Activated B cell treated with CpG ODN at 0.5 μM for 24 hours (primary cell): ENCODE measurements at regions of chr5 and their contacts with region 1.

Region 1: GRCh38 chr5:124935065-124935464 is 188.6 kb upstream of the ZNF608 start:
- DNase-seq: no peak
- ATAC-seq: peak; percentile 63
- H3K4me3 Mint-ChIP-seq: peak overlapping the region; percentile 38
- H3K27ac Mint-ChIP-seq: peak overlapping the region; percentile 94
- H3K4me1 Mint-ChIP-seq: peaks cover 24% of the 10 kb centered on the region
- H3K27me3 Mint-ChIP-seq: no peaks in the 10 kb centered on the region
- CTCF ChIP-seq: no peak

Region 2: GRCh38 chr5:124056991-124057723 is 877.9 kb before region 1 on chr5:
- CTCF ChIA-PET with region 1: no interaction called
- POLR2A ChIA-PET with region 1: no interaction called
- intact Hi-C with region 1: loop called (anchors 1 kb)
- DNase-seq: peak; percentile 59
- ATAC-seq: peak; percentile 85
- H3K4me3 Mint-ChIP-seq: peak overlapping the region; percentile 82
- H3K27ac Mint-ChIP-seq: peak overlapping the region; percentile 90
- H3K4me1 Mint-ChIP-seq: peaks cover 57% of the 10 kb centered on the region
- H3K27me3 Mint-ChIP-seq: no peaks in the 10 kb centered on the region
- CTCF ChIP-seq: no peak

Region 3: DNA sequence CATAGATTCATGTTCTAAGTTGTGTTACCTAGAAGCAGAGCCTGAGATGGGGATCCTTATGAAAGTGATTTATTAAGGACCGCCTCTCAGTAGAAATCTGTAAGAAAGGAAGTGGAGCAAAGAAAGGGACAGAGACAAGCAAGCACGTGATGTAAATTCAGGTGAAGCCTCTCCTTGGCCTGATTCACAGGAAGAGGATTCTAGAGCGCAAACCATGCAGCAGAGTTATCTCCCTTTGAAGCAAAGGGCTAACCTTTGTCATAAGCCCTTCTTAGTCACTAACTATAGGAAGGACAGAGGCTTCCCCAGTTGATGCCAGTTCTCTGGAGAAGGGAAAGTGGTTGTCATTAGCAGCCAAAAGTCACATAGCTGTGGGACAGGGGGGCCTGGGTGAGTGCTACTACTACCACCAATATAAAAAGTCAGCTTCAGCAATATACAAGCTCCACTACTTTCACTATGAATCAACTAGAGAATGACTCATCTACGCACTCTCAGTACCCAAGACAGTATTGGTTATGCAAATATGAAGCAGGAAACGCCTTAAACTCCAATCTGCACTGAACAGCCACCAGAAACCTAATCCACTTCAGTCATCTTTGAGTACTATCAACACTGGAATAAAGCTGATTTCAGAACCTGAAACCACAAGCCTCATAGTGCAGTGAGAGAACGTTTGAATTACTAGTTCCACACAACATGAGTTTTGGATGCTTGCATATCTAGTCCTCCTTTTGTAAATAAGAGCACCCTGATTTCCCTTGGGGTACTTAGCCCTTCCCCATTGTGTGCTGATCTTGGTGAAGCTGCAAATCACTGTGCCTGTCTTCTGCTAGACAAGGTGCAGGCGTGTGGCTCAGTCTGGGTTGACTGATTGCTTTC is 351.4 kb before region 1 on chr5:
- CTCF ChIA-PET with region 1: no interaction called
- POLR2A ChIA-PET with region 1: interaction called, 3 read pairs
- intact Hi-C with region 1: loop called (anchors 1 kb)
- DNase-seq: peak; percentile 23
- ATAC-seq: peak; percentile 89
- H3K4me3 Mint-ChIP-seq: peak overlapping the region; percentile 61
- H3K27ac Mint-ChIP-seq: peak overlapping the region; percentile 94
- H3K4me1 Mint-ChIP-seq: peaks cover 36% of the 10 kb centered on the region
- H3K27me3 Mint-ChIP-seq: no peaks in the 10 kb centered on the region
- CTCF ChIP-seq: no peak

Region 4: GRCh38 chr5:124902097-124902821 is 32.8 kb before region 1 on chr5:
- CTCF ChIA-PET with region 1: no interaction called
- POLR2A ChIA-PET with region 1: interaction called, 7 read pairs
- intact Hi-C with region 1: loop called (anchors 1 kb)
- DNase-seq: peak; percentile 37
- ATAC-seq: peak; percentile 98
- H3K4me3 Mint-ChIP-seq: peak overlapping the region; percentile 72
- H3K27ac Mint-ChIP-seq: peak overlapping the region; percentile 88
- H3K4me1 Mint-ChIP-seq: peaks cover 40% of the 10 kb centered on the region
- H3K27me3 Mint-ChIP-seq: no peaks in the 10 kb centered on the region
- CTCF ChIP-seq: no peak

Region 5: GRCh38 chr5:124980163-124980941 is 45.3 kb after region 1 on chr5:
- CTCF ChIA-PET with region 1: no interaction called
- POLR2A ChIA-PET with region 1: no interaction called
- intact Hi-C with region 1: loop called (anchors 1 kb)
- DNase-seq: no peak
- ATAC-seq: peak; percentile 90
- H3K4me3 Mint-ChIP-seq: peak overlapping the region; percentile 59
- H3K27ac Mint-ChIP-seq: peak overlapping the region; percentile 62
- H3K4me1 Mint-ChIP-seq: peaks cover 60% of the 10 kb centered on the region
- H3K27me3 Mint-ChIP-seq: no peaks in the 10 kb centered on the region
- CTCF ChIP-seq: no peak

Region 6: GRCh38 chr5:125083981-125084380 is 148.9 kb after region 1 on chr5:
- CTCF ChIA-PET with region 1: no interaction called
- POLR2A ChIA-PET with region 1: no interaction called
- intact Hi-C with region 1: no loop called
- DNase-seq: no peak
- ATAC-seq: no peak
- H3K4me3 Mint-ChIP-seq: no peak overlapping the region
- H3K27ac Mint-ChIP-seq: no peak overlapping the region
- H3K4me1 Mint-ChIP-seq: no peaks in the 10 kb centered on the region
- H3K27me3 Mint-ChIP-seq: no peaks in the 10 kb centered on the region
- CTCF ChIP-seq: no peak

Region 7: GRCh38 chr5:125152044-125152443 is 217.0 kb after region 1 on chr5:
- CTCF ChIA-PET with region 1: no interaction called
- POLR2A ChIA-PET with region 1: no interaction called
- intact Hi-C with region 1: no loop called
- DNase-seq: no peak
- ATAC-seq: no peak
- H3K4me3 Mint-ChIP-seq: no peak overlapping the region
- H3K27ac Mint-ChIP-seq: no peak overlapping the region
- H3K4me1 Mint-ChIP-seq: peaks cover 20% of the 10 kb centered on the region
- H3K27me3 Mint-ChIP-seq: no peaks in the 10 kb centered on the region
- CTCF ChIP-seq: no peak